HEK293T (cell line): ENCODE measurements at regions of chr2 and their contacts with region 1.

Region 1: DNA sequence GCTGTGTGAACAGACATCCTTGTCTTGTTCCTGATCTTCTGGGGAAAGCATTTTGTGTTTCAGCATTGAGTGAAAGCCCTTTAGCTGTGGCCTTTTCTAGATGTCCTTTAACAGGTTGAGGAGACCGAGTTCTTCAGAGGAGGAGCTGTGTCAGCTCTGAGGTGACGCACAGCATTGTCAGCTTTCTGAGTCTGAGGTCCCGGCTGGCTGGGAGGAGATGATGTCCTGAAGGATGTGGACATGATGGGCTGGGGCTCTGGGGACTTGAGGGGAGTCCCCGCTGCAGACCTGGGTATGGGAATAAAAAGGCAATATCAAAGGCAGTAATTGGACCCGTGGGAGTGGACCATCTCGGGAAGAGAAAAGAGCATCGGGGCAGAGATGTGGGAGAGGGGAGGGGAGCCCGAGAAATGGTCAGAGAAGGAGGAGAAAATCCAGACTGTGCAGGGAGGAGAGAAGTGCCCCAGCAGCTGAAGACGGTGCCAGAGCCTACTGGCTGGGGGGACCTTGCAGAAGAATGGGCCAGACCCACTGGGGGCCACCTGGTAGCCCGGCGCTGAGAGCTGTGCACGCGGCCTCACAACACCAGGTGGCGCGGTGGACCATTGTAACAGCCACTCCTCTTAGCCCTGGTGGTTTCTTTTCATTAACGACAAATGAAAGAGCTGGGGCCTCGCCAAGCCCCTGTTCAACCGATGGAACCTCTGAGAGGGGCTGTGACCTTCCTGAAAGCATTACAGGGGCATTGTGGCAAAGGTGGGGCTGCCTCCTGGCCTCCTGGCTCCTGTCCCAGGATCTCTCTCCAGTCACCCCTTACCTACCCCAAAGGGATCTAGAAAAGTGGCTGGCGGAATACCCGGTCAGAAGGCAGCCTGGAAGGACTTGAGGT is 61.6 kb downstream of the ST3GAL5 start:
- DNase-seq: peak; percentile 81

Region 2: GRCh38 chr2:85684806-85685205 is 142.4 kb before region 1 on chr2:
- CTCF ChIA-PET with region 1: no interaction called
- POLR2A ChIA-PET with region 1: no interaction called
- DNase-seq: no peak

Region 3: GRCh38 chr2:86078774-86079545 is 251.7 kb after region 1 on chr2:
- CTCF ChIA-PET with region 1: interaction called, 19 read pairs
- POLR2A ChIA-PET with region 1: no interaction called
- DNase-seq: no peak